Activated B cell treated with CpG ODN at 0.5 μM for 24 hours (primary cell): ENCODE measurements at regions of chr4 and their contacts with region 1.

Region 1: GRCh38 chr4:182938205-182938645 is 21.0 kb upstream of the DCTD start:
- DNase-seq: peak; percentile 49
- ATAC-seq: peak; percentile 95
- H3K4me3 Mint-ChIP-seq: no peak overlapping the region
- H3K27ac Mint-ChIP-seq: no peak overlapping the region
- H3K4me1 Mint-ChIP-seq: peaks cover 5% of the 10 kb centered on the region
- H3K27me3 Mint-ChIP-seq: peaks cover 14% of the 10 kb centered on the region
- CTCF ChIP-seq: no peak

Region 2: DNA sequence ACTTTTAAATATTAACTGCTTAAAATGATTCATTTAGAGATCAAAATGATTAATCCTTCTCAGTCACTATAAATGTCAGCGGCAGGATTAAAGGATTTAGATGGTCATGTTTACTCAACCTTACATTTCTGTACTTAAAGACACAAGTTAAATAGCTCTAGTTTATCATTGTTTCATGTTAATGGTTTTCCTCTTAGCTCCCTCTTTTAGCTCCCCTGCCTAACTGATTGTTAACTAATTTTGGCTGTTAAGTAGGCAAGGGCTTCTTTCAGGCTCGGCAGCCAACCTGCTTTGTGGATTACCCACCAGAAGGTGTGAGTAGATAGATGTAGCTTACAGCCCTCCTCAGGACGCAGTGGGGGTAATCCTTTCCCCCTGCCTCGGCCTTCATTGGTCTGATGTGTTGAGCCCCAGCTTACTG is 599.0 kb before region 1 on chr4:
- CTCF ChIA-PET with region 1: no interaction called
- POLR2A ChIA-PET with region 1: no interaction called
- intact Hi-C with region 1: no loop called
- DNase-seq: no peak
- ATAC-seq: no peak
- H3K4me3 Mint-ChIP-seq: no peak overlapping the region
- H3K27ac Mint-ChIP-seq: no peak overlapping the region
- H3K4me1 Mint-ChIP-seq: no peaks in the 10 kb centered on the region
- H3K27me3 Mint-ChIP-seq: no peaks in the 10 kb centered on the region
- CTCF ChIP-seq: no peak

Region 3: GRCh38 chr4:183074296-183074990 is 136.2 kb after region 1 on chr4:
- CTCF ChIA-PET with region 1: interaction called, 3 read pairs
- POLR2A ChIA-PET with region 1: no interaction called
- intact Hi-C with region 1: loop called (anchors 2 kb)
- DNase-seq: no peak
- ATAC-seq: no peak
- H3K4me3 Mint-ChIP-seq: no peak overlapping the region
- H3K27ac Mint-ChIP-seq: no peak overlapping the region
- H3K4me1 Mint-ChIP-seq: no peaks in the 10 kb centered on the region
- H3K27me3 Mint-ChIP-seq: peaks cover 7% of the 10 kb centered on the region
- CTCF ChIP-seq: no peak

Region 4: DNA sequence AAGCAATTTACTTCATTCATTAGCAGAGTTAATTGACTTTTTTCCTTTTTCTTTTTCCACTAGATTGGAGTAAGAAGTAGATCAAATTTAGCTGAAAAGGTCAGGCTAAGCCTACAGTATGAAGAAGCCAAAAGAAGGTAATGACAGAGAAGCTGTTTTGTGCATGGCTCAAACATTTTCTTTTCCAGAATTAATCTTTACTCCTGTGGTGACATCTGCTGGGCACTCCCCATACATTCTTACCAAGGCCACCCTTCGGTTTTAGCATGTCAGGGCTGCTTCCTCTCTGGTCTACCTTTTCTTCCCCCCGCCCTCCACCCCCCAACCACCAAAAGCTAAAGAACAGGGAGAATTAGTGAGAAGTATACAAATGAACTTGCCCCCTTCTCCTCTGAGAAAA is 311.6 kb after region 1 on chr4:
- CTCF ChIA-PET with region 1: interaction called, 17 read pairs
- POLR2A ChIA-PET with region 1: no interaction called
- intact Hi-C with region 1: no loop called
- DNase-seq: no peak
- ATAC-seq: no peak
- H3K4me3 Mint-ChIP-seq: no peak overlapping the region
- H3K27ac Mint-ChIP-seq: no peak overlapping the region
- H3K4me1 Mint-ChIP-seq: no peaks in the 10 kb centered on the region
- H3K27me3 Mint-ChIP-seq: peaks cover 3% of the 10 kb centered on the region
- CTCF ChIP-seq: no peak

Region 5: GRCh38 chr4:183256756-183257385 is 318.6 kb after region 1 on chr4:
- CTCF ChIA-PET with region 1: interaction called, 29 read pairs
- POLR2A ChIA-PET with region 1: no interaction called
- intact Hi-C with region 1: loop called (anchors 1 kb)
- DNase-seq: no peak
- ATAC-seq: peak; percentile 50
- H3K4me3 Mint-ChIP-seq: no peak overlapping the region
- H3K27ac Mint-ChIP-seq: no peak overlapping the region
- H3K4me1 Mint-ChIP-seq: no peaks in the 10 kb centered on the region
- H3K27me3 Mint-ChIP-seq: peaks cover 6% of the 10 kb centered on the region
- CTCF ChIP-seq: no peak

Region 6: GRCh38 chr4:183407128-183407585 is 468.9 kb after region 1 on chr4:
- CTCF ChIA-PET with region 1: interaction called, 4 read pairs
- POLR2A ChIA-PET with region 1: no interaction called
- intact Hi-C with region 1: loop called (anchors 1 kb)
- DNase-seq: peak; percentile 90
- ATAC-seq: peak; percentile 99
- H3K4me3 Mint-ChIP-seq: peak overlapping the region; percentile 79
- H3K27ac Mint-ChIP-seq: peak overlapping the region; percentile 35
- H3K4me1 Mint-ChIP-seq: peaks cover 15% of the 10 kb centered on the region
- H3K27me3 Mint-ChIP-seq: no peaks in the 10 kb centered on the region
- CTCF ChIP-seq: no peak